GM12878 (cell line): ENCODE measurements at regions of chr4 and their contacts with region 1.

Region 1: GRCh38 chr4:78656968-78657445 is 105.4 kb downstream of the ANXA3 start:
- DNase-seq: no peak
- ATAC-seq: peak; percentile 25
- H3K4me3 ChIP-seq: peak overlapping the region; percentile 39
- H3K27ac ChIP-seq: peak overlapping the region; percentile 28; the same call in 1 of the 2 replicates
- H3K4me1 ChIP-seq: peaks cover 34% of the 10 kb centered on the region
- H3K27me3 ChIP-seq: no peaks in the 10 kb centered on the region
- CTCF ChIP-seq: no peak
- EP300 ChIP-seq: peak; percentile 47 to 76; a peak in 2 of 4 replicates
- POLR2A ChIP-seq: no peak
- RAD21 ChIP-seq: 0 out of 2 replicates have a peak, but pooled peaks have one; percentile 7

Region 2: DNA sequence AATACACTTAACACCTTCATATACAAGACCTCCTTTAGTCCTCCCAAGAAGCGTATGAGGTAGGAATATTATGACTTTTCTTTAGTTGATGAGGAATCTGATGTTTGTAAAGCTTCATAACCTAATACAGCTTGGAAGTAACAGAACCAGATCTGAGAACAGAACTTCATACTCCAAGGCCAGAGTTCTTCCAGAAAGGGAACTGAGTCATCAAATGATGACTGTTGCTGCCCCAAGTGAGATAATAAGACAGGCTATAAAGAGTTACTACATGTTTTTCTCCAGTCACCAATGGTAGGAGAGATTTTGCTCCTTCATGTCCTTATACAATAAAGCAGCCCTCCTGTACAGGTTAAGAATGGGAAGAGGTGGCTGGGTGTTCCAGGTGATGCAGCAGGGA is 179.7 kb before region 1 on chr4:
- CTCF ChIA-PET with region 1: no interaction called
- POLR2A ChIA-PET with region 1: no interaction called
- RAD21 ChIA-PET with region 1: no interaction called
- SMC1A ChIA-PET with region 1: no interaction called
- in situ Hi-C with region 1: no loop called
- intact Hi-C with region 1: no loop called
- DNase-seq: no peak
- ATAC-seq: no peak
- H3K4me3 ChIP-seq: no peak overlapping the region
- H3K27ac ChIP-seq: no peak overlapping the region
- H3K4me1 ChIP-seq: no peaks in the 10 kb centered on the region
- H3K27me3 ChIP-seq: no peaks in the 10 kb centered on the region
- CTCF ChIP-seq: no peak
- EP300 ChIP-seq: no peak
- POLR2A ChIP-seq: no peak
- RAD21 ChIP-seq: no peak

Region 3: DNA sequence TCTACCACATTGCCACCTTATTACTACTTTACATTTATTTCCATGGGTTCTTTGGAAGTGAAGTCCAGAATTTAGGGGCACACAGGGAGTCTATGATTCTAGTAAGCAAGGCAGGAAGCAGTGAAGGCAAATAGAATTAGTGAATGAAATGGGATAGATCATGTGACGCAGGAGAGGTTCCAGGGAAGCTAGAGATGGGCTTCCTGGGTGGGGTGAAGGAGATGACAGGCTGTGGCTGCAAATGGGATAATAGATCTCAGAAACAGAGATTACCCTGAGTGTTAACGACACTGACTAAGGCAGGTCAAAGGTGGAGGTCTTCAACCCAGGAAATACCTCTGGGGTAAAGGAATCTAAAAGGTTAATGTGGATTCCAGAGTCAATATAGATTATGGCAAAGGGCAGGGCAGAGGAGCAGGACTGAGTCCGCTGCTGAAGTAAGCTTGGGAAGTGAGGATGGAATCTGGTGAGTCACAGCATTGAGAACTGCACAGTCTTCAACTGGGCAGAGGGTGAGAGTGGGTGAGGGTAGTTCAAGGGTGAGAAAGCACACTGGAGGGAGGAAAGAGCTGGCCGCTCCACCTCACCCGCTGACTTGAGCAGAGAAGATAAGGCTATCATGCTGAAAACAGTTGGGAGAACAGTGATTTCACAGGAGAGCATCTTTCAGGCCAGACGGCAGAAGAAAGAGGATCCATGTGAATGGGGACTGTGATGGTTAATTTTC is 34.6 kb before region 1 on chr4:
- CTCF ChIA-PET with region 1: no interaction called
- POLR2A ChIA-PET with region 1: no interaction called
- RAD21 ChIA-PET with region 1: interaction called, 5 read pairs
- SMC1A ChIA-PET with region 1: interaction called, 79 read pairs
- in situ Hi-C with region 1: no loop called
- intact Hi-C with region 1: no loop called
- DNase-seq: no peak
- ATAC-seq: no peak
- H3K4me3 ChIP-seq: no peak overlapping the region
- H3K27ac ChIP-seq: no peak overlapping the region
- H3K4me1 ChIP-seq: peaks cover 12% of the 10 kb centered on the region; the same call in 1 of the 2 replicates
- H3K27me3 ChIP-seq: no peaks in the 10 kb centered on the region
- CTCF ChIP-seq: no peak
- EP300 ChIP-seq: no peak
- POLR2A ChIP-seq: no peak
- RAD21 ChIP-seq: no peak

Region 4: DNA sequence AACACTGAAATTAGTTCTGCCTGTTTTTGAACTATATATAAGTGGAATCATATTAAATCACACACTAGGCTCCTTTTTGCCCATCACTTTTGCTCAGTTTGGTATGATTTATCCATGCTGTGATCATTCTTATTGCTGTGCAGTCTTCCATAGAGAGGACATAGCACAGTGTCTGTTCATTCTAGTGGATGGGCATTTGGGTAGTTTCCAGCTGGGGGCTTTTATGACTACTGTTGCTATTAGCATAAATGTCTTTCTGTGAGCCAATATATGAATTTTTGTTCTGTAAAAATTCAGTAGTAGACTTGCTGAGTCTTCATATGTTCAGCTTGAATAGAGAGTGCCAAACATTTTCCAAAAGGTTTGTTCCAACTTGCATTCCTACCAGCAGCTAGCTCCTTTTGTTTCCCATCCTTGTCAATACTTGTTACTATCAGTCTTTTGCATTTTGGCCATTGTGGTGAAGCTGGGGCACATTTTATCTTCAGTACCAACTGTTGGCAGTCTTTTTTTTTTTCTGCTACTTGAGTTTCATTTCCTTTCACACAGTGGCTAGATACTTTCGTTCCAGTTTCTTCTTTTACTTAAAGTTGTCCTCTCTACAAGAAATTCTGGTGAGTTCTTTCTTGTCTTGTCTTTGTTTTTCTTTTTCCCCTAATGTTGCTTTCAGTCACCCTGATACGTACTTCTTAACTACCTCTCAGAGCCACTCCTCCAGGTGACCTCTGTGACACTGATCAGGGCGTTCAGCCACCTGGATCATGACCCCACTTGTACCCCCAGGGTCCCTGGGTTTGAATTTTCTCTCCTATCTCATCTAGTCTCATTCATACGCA is 18.5 kb before region 1 on chr4:
- CTCF ChIA-PET with region 1: interaction called, 6 read pairs
- POLR2A ChIA-PET with region 1: interaction called, 4 read pairs
- RAD21 ChIA-PET with region 1: interaction called, 10 read pairs
- SMC1A ChIA-PET with region 1: interaction called, 18 read pairs
- in situ Hi-C with region 1: no loop called
- intact Hi-C with region 1: no loop called
- DNase-seq: peak; percentile 86
- ATAC-seq: peak; percentile 78
- H3K4me3 ChIP-seq: no peak overlapping the region; the same call in 1 of the 2 replicates
- H3K27ac ChIP-seq: peak overlapping the region; percentile 62
- H3K4me1 ChIP-seq: peaks cover 57% of the 10 kb centered on the region
- H3K27me3 ChIP-seq: no peaks in the 10 kb centered on the region
- CTCF ChIP-seq: no peak
- EP300 ChIP-seq: peak; percentile 79; a peak in 3 of 4 replicates
- POLR2A ChIP-seq: no peak
- RAD21 ChIP-seq: no peak

Region 5: GRCh38 chr4:79042079-79042674 is 385.2 kb after region 1 on chr4:
- CTCF ChIA-PET with region 1: no interaction called
- POLR2A ChIA-PET with region 1: no interaction called
- RAD21 ChIA-PET with region 1: no interaction called
- SMC1A ChIA-PET with region 1: no interaction called
- in situ Hi-C with region 1: no loop called
- intact Hi-C with region 1: no loop called
- DNase-seq: no peak
- ATAC-seq: peak; percentile 67
- H3K4me3 ChIP-seq: no peak overlapping the region
- H3K27ac ChIP-seq: no peak overlapping the region
- H3K4me1 ChIP-seq: no peaks in the 10 kb centered on the region
- H3K27me3 ChIP-seq: no peaks in the 10 kb centered on the region
- CTCF ChIP-seq: peak; percentile 38 to 62 (median 43); a peak in 4 of 6 replicates
- EP300 ChIP-seq: no peak
- POLR2A ChIP-seq: no peak
- RAD21 ChIP-seq: peak; percentile 84